ENCODE measurements at regions of chr22 and their contacts with region 1.

Region 1: GRCh38 chr22:21712894-21713712 is 22.5 kb downstream of the YPEL1 start:
- DNase-seq: peak; percentile 89
- H3K4me3 ChIP-seq: peak overlapping the region; percentile 61
- H3K27ac ChIP-seq: no peak overlapping the region
- H3K4me1 ChIP-seq: peaks cover 10% of the 10 kb centered on the region
- H3K27me3 ChIP-seq: no peaks in the 10 kb centered on the region

Region 2: GRCh38 chr22:21942407-21943343 is 229.6 kb after region 1 on chr22:
- in situ Hi-C with region 1: loop called (anchors 5 kb)
- DNase-seq: peak; percentile 94
- H3K4me3 ChIP-seq: peak overlapping the region; percentile 39
- H3K27ac ChIP-seq: peak overlapping the region; percentile 96
- H3K4me1 ChIP-seq: peaks cover 39% of the 10 kb centered on the region
- H3K27me3 ChIP-seq: no peaks in the 10 kb centered on the region

Measured in GM23248 (cell line).